Transverse colon (tissue), 4 donors: ENCODE measurements at regions of chr12 and their contacts with region 1.

Region 1: DNA sequence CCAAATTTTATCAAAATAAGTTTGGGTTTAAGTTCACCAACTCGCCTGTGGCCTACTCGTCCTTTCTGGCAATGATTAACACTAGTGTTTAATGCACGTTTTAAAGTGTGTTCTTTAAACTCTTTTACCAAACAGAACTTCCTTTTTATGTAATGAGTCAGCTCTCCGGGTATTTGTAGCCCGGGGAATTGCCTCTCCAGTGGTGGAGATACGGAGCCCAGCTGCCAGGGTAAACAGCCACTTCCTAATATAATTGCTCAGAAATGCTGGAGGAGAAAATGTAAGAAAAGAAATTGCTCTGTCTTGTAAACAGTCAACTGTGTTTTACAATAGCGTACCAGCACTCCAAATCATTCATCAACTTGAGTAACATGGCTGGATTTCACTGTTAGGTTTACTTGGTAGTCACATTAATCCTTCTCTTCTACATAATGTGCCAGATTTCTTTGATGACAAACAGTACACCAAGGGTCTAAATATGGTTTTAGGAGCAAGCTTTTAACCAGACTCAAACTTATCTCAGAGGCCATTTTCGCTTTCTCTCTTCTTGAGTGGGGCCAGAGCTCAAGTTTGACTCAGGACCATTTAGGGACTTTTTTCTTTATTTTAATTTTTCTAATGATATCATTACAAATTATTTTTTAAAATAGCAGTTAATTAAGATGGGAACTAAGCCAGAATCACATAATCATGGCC is 101.2 kb upstream of the SLC38A2 start:
- DNase-seq: peak; percentile 75
- H3K4me3 ChIP-seq: peak overlapping the region in 1 of 4 donors; percentile 16
- H3K27ac ChIP-seq: peak overlapping the region; percentile 77 to 84 (median 81)
- H3K4me1 ChIP-seq: peaks cover 11 to 31% (median 23%) of the 10 kb centered on the region in 4 donors
- H3K27me3 ChIP-seq: no peaks in the 10 kb centered on the region
- CTCF ChIP-seq: peak in 1 of 5 experiments; percentile 20
- EP300 ChIP-seq: no peak
- POLR2A ChIP-seq: no peak

Region 2: GRCh38 chr12:46382964-46383653 is 90.7 kb before region 1 on chr12:
- in situ Hi-C with region 1: loop called in 1 of 4 experiments (anchors 10 kb)
- intact Hi-C with region 1: no loop called
- DNase-seq: peak; percentile 98
- H3K4me3 ChIP-seq: peak overlapping the region; percentile 65 to 86 (median 72)
- H3K27ac ChIP-seq: peak overlapping the region; percentile 98 to 100 (median 100)
- H3K4me1 ChIP-seq: peaks cover 7 to 49% (median 29%) of the 10 kb centered on the region in 4 donors
- H3K27me3 ChIP-seq: no peaks in the 10 kb centered on the region
- CTCF ChIP-seq: peak in 3 of 5 experiments; percentile 10 to 49 (median 24)
- EP300 ChIP-seq: no peak
- POLR2A ChIP-seq: peak; percentile 33

Region 3: DNA sequence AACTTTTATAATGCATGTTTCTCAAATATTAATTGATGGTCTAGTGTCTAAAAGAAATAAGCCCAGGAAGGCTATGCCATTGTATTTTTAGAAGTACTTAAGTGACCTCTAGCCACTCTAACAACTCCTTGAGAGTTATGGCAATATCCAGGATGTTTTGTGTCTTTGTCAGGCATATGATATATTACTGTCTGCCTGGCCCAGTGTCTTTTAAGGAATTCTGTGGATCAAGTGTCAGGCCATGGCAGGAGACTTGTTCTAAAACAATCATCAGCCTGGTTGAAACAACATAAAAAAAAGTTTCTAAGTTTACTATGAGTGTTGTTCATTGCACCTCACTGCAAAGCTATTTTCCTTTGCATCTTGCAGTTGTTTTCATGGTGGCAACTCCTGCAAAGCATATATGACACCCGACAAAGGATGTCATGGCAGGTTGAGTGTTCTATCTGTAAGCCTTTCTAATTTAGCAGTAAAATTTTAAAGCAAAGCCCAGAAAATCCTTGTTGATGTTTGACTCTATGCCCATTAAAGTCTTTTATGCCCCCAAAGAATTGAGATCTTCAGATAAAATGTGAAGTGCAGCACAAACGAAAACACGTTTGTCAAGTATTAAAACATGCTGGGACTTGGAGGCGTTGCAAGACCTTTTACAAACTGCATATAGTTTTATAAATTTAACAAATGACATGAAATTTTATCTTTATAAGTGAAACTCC is 11.7 kb before region 1 on chr12:
- in situ Hi-C with region 1: no loop called
- intact Hi-C with region 1: loop called (anchors 2 kb)
- DNase-seq: no peak
- H3K4me3 ChIP-seq: no peak overlapping the region
- H3K27ac ChIP-seq: peak overlapping the region in 2 of 4 donors; percentile 6 to 21
- H3K4me1 ChIP-seq: peaks cover 0 to 44% (median 13%) of the 10 kb centered on the region in 4 donors
- H3K27me3 ChIP-seq: no peaks in the 10 kb centered on the region
- CTCF ChIP-seq: no peak
- EP300 ChIP-seq: no peak
- POLR2A ChIP-seq: no peak